CD4-positive, alpha-beta T cell (primary cell): ENCODE measurements at regions of chr11 and their contacts with region 1.

Region 1: GRCh38 chr11:96254087-96254486 is 88.9 kb downstream of the MAML2 start:
- DNase-seq: peak in 7 of 14 experiments; percentile 21 to 84 (median 49)
- ATAC-seq: peak; percentile 15
- H3K4me3 ChIP-seq: peak overlapping the region; percentile 23
- H3K4me3 Mint-ChIP-seq: peak overlapping the region; percentile 81
- H3K27ac ChIP-seq: peak overlapping the region; percentile 26 to 53
- H3K27ac Mint-ChIP-seq: peak overlapping the region; percentile 99
- H3K4me1 ChIP-seq: peaks cover 47% of the 10 kb centered on the region
- H3K4me1 Mint-ChIP-seq: peaks cover 92% of the 10 kb centered on the region
- H3K27me3 ChIP-seq: no peaks in the 10 kb centered on the region
- H3K27me3 Mint-ChIP-seq: no peaks in the 10 kb centered on the region
- CTCF ChIP-seq: no peak

Region 2: DNA sequence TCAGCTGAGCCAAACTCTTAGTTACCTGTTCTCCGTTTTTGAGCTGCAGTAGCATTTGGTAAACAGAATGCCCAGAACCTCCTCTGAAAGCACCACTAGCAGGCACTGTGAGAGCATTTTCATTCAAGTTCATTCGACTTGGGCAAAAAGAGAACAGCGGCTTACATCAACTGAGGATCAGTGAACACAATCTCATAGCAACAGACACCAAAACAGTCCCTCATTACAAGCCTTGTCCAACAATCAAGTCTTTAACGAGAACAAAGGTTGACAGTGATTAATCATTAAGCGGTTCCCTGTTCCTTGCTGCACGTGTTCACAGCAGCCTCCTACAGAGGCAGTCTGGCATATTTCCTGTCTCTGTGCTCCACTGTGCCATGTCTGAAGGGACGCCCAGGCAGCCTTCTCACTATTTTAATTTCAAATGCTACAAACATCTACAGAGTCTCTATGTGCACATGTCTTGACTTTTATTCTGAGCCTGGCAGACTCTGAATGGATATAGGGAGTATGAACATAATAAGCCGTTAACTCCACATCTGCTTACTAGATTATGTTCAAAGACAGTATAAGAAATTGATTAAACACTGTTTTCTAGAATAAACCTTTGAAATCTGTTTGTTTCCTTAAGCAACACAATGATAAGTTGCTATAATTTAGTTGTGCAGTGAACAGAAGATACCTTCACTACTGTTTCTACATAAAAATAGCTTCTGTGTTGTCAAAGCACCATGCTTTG is 241.8 kb before region 1 on chr11:
- CTCF ChIA-PET with region 1: interaction called, 3 read pairs
- POLR2A ChIA-PET with region 1: interaction called, 4 read pairs
- intact Hi-C with region 1: loop called in 1 of 2 experiments (anchors 1 kb)
- DNase-seq: peak; percentile 34 to 89 (median 57)
- ATAC-seq: peak; percentile 75
- H3K4me3 ChIP-seq: peak overlapping the region; percentile 24
- H3K4me3 Mint-ChIP-seq: peak overlapping the region; percentile 54
- H3K27ac ChIP-seq: peak overlapping the region; percentile 10 to 82
- H3K27ac Mint-ChIP-seq: no peak overlapping the region
- H3K4me1 ChIP-seq: peaks cover 33% of the 10 kb centered on the region
- H3K4me1 Mint-ChIP-seq: peaks cover 21% of the 10 kb centered on the region
- H3K27me3 ChIP-seq: no peaks in the 10 kb centered on the region
- H3K27me3 Mint-ChIP-seq: no peaks in the 10 kb centered on the region
- CTCF ChIP-seq: peak; percentile 39

Region 3: GRCh38 chr11:96102664-96103078 is 151.4 kb before region 1 on chr11:
- CTCF ChIA-PET with region 1: no interaction called
- POLR2A ChIA-PET with region 1: no interaction called
- intact Hi-C with region 1: no loop called
- DNase-seq: no peak
- ATAC-seq: no peak
- H3K4me3 ChIP-seq: no peak overlapping the region
- H3K4me3 Mint-ChIP-seq: no peak overlapping the region
- H3K27ac ChIP-seq: no peak overlapping the region
- H3K27ac Mint-ChIP-seq: peak overlapping the region; percentile 52
- H3K4me1 ChIP-seq: peaks cover 4% of the 10 kb centered on the region
- H3K4me1 Mint-ChIP-seq: peaks cover 52% of the 10 kb centered on the region
- H3K27me3 ChIP-seq: no peaks in the 10 kb centered on the region
- H3K27me3 Mint-ChIP-seq: no peaks in the 10 kb centered on the region
- CTCF ChIP-seq: no peak

Region 4: GRCh38 chr11:96215110-96215782 is 38.8 kb before region 1 on chr11:
- CTCF ChIA-PET with region 1: interaction called, 3 read pairs
- POLR2A ChIA-PET with region 1: interaction called, 23 read pairs
- intact Hi-C with region 1: loop called (anchors 5 kb)
- DNase-seq: peak in 12 of 14 experiments; percentile 11 to 71 (median 31)
- ATAC-seq: peak; percentile 68
- H3K4me3 ChIP-seq: peak overlapping the region; percentile 11
- H3K4me3 Mint-ChIP-seq: peak overlapping the region; percentile 65
- H3K27ac ChIP-seq: peak overlapping the region; percentile 75
- H3K27ac Mint-ChIP-seq: peak overlapping the region; percentile 92
- H3K4me1 ChIP-seq: peaks cover 70% of the 10 kb centered on the region
- H3K4me1 Mint-ChIP-seq: peaks cover 87% of the 10 kb centered on the region
- H3K27me3 ChIP-seq: no peaks in the 10 kb centered on the region
- H3K27me3 Mint-ChIP-seq: no peaks in the 10 kb centered on the region
- CTCF ChIP-seq: no peak

Region 5: GRCh38 chr11:96267496-96268032 is 13.5 kb after region 1 on chr11:
- CTCF ChIA-PET with region 1: interaction called, 5 read pairs
- POLR2A ChIA-PET with region 1: interaction called, 11 read pairs
- intact Hi-C with region 1: no loop called
- DNase-seq: peak in 5 of 14 experiments; percentile 18 to 71 (median 66)
- ATAC-seq: peak; percentile 78
- H3K4me3 ChIP-seq: peak overlapping the region; percentile 25
- H3K4me3 Mint-ChIP-seq: peak overlapping the region; percentile 81
- H3K27ac ChIP-seq: peak overlapping the region; percentile 39 to 43
- H3K27ac Mint-ChIP-seq: peak overlapping the region; percentile 83
- H3K4me1 ChIP-seq: peaks cover 25% of the 10 kb centered on the region
- H3K4me1 Mint-ChIP-seq: peaks cover 84% of the 10 kb centered on the region
- H3K27me3 ChIP-seq: no peaks in the 10 kb centered on the region
- H3K27me3 Mint-ChIP-seq: no peaks in the 10 kb centered on the region
- CTCF ChIP-seq: no peak

Region 6: DNA sequence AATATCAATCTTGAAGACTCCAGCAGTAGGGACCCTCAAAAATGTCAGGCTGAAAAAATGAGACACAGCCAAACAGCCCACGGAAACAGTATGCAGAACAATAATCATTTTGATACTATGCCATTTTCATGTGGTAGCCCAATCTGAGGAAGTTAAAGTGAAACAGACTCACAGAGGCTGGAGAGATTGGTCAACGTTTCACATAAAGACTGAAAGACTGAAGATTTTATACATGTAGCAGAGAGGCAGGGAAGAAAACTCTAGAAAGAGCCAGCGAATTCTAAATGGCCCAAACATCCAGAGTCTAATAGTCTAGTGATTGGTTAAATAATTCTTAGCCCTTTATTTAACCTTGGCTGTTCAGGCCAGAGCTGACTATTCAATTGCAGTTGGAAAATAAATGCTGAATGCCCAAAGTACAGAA is 39.5 kb after region 1 on chr11:
- CTCF ChIA-PET with region 1: no interaction called
- POLR2A ChIA-PET with region 1: no interaction called
- intact Hi-C with region 1: loop called in 1 of 2 experiments (anchors 5 kb)
- DNase-seq: peak in 2 of 14 experiments; percentile 30 to 41
- ATAC-seq: no peak
- H3K4me3 ChIP-seq: no peak overlapping the region
- H3K4me3 Mint-ChIP-seq: peak overlapping the region; percentile 60
- H3K27ac ChIP-seq: peak overlapping the region in 1 of 2 donors; percentile 4
- H3K27ac Mint-ChIP-seq: peak overlapping the region; percentile 46
- H3K4me1 ChIP-seq: peaks cover 4% of the 10 kb centered on the region
- H3K4me1 Mint-ChIP-seq: peaks cover 91% of the 10 kb centered on the region
- H3K27me3 ChIP-seq: no peaks in the 10 kb centered on the region
- H3K27me3 Mint-ChIP-seq: no peaks in the 10 kb centered on the region
- CTCF ChIP-seq: no peak

Region 7: DNA sequence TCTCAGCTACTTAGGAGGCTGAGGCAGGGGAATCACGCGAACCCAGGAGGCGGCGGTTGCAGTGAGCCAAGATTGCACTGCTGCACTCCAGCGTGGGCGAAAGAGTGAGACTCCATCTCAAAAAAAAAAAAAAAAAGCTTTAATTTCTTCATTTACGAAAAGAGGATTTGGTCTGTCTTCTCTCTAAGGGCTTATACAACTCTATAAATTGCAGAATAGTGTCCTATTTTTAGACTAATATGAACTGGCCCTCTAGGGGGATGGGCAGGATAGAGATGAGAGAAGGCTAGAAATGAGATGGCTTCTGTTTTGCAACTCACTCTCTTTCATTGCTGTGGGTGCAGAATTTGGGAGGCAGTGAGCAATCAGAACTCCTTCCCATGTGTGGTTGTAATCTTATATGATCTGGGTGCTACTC is 77.6 kb after region 1 on chr11:
- CTCF ChIA-PET with region 1: no interaction called
- POLR2A ChIA-PET with region 1: no interaction called
- intact Hi-C with region 1: loop called in 1 of 2 experiments (anchors 5 kb)
- DNase-seq: no peak
- ATAC-seq: no peak
- H3K4me3 ChIP-seq: no peak overlapping the region
- H3K4me3 Mint-ChIP-seq: peak overlapping the region; percentile 49
- H3K27ac ChIP-seq: no peak overlapping the region
- H3K27ac Mint-ChIP-seq: peak overlapping the region; percentile 58
- H3K4me1 ChIP-seq: peaks cover 21% of the 10 kb centered on the region
- H3K4me1 Mint-ChIP-seq: peaks cover 85% of the 10 kb centered on the region
- H3K27me3 ChIP-seq: no peaks in the 10 kb centered on the region
- H3K27me3 Mint-ChIP-seq: no peaks in the 10 kb centered on the region
- CTCF ChIP-seq: no peak